MCF 10A (cell line): ENCODE measurements at regions of chr19 and their contacts with region 1.

Region 1: DNA sequence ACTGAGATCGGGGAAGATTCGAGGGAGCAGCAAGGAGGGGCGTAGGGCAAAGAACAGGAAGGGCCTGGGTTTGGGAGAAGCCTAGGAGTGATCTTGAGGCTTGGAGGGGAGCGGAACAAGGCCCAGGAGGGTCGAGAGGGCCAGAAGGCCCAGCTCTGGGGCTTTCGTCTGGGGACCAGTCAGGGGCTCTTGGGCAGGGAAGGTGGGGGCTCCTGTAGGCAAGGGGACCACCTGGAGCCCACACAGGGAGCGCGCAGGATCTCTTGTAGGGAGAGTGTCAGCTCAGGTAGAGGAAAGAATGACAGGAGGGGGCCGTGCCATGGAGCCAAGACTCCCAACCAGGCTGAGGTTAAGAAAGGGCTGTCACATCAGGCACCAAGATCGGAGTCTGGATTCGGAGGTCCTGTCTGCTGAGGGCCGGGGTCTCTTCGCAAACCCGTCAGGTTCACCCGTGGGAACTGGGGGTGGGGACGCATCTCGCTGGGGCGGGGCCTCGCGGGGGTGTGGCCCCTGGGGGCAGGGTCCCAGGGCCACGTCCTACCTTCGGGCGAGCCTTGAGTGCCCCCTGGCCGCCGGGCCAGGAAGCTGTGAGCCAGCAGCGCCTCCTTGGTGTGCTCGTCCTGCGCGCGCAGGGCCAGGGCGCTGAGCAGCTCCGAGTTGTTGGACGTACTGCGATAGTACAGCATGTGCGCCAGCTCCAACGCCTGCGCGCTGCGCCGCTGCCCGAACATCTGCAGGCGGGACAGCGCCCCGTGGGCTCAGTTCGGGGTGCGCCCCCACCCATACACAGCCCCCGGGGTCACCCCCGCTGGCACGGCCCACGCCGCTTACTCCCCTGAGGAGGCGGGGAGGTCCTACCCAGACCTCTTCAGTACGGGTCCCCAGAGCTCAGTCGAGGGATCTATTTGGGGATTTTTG is 8.4 kb downstream of the EMP3 start:
- DNase-seq: peak; percentile 96
- H3K4me3 Mint-ChIP-seq: peak overlapping the region; percentile 89
- H3K27ac Mint-ChIP-seq: peak overlapping the region; percentile 85
- H3K4me1 Mint-ChIP-seq: peaks cover 32% of the 10 kb centered on the region
- H3K27me3 Mint-ChIP-seq: no peaks in the 10 kb centered on the region
- CTCF ChIP-seq: peak; percentile 93

Region 2: DNA sequence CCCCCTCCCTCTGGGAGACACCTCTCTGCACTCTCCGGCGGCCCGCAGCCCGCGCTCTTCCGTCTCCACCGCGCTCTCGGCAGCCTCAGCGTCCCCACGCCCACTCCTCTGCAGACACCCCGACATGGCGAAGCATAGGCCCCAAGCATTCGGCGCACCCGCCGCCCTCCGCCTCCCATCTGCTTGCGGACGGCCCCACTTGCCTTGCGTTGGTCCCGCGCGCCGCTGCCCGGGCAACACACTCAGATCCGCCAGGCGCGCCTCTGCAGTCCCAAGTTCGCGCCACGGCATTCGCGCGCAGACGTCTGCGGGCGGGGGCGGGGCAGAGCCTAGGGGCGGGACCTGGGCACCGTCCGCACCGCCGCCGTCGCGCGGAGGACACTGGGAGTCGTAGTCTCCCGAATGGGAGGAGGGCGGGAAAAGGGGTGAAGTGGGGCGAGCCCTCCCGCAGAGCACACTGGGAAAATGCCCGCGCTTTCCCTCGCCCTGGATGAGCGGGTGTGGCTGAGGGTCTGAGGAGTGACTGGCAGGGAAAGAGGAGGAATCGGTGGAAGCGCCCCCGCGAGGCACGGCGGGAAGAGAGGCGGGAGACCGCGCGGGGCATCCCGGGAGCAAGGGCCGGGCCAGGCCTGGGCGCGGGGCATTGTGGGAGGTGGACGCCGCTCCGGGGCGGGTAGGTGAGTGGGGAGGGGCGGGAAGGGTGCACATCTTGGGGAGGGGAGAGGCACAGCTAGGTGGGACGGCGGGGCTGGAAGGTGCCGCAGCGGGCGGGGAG is 163.5 kb before region 1 on chr19 and contains the starts of genes LIG1 and ZSWIM9:
- CTCF ChIA-PET with region 1: no interaction called
- POLR2A ChIA-PET with region 1: no interaction called
- intact Hi-C with region 1: no loop called
- DNase-seq: peak; percentile 95
- H3K4me3 Mint-ChIP-seq: peak within 1 kb of the TSS; percentile 90
- H3K27ac Mint-ChIP-seq: peak within 1 kb of the TSS; percentile 90
- H3K4me1 Mint-ChIP-seq: peaks cover 19% of the 10 kb centered on the region
- H3K27me3 Mint-ChIP-seq: no peaks in the 10 kb centered on the region
- CTCF ChIP-seq: no peak
- total RNA-seq, gene LIG1: 12.2 and 14.6 TPM in 2 replicates
- total RNA-seq, gene ZSWIM9: 4.8 and 5.5 TPM in 2 replicates

Region 3: DNA sequence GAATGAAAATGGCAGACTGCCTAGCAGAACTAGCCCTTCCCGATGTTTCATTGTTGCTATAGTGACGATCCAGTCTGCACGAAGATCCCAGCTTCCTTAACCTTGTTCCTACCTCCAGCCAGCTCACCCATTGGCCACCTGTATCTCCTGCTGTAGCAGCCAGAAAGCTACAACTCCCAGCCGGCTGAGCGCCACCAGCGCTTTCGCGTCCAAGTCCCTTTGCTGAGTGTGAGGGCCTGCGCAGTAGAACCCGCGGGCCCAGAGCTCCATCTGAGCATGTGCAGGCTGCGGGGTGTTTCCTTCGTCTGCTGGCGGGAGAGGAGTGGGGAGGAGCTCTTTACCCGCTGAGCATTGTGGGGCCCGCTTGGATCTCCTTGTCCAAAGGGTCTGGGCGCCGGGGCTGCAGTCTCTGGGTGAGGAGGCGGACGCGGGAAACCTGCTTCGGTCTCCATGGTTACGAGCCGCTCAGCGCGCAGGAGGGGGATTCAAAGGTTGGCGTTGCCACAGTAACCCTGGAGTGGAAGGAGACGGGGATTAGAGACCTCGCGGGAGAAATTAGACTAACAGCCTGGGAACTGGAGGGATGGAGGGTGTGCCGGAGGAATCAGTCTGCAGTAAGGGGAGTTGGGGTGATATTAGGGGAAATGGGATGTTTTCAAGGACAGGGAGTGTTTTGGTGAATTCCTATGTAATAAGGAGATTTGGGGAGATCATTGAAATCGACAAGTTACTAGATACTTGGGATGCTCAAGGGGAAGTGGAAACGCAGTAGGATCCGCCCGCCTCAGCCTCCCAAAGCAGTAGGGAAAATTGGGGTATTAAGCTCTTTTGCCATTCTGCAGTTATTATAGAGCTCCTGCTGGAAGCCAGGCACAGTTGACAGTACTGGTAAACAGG is 129.7 kb before region 1 on chr19:
- CTCF ChIA-PET with region 1: interaction called, 5 read pairs
- POLR2A ChIA-PET with region 1: interaction called, 15 read pairs
- intact Hi-C with region 1: no loop called
- DNase-seq: peak; percentile 97
- H3K4me3 Mint-ChIP-seq: no peak overlapping the region
- H3K27ac Mint-ChIP-seq: no peak overlapping the region
- H3K4me1 Mint-ChIP-seq: no peaks in the 10 kb centered on the region
- H3K27me3 Mint-ChIP-seq: no peaks in the 10 kb centered on the region
- CTCF ChIP-seq: no peak

Region 4: DNA sequence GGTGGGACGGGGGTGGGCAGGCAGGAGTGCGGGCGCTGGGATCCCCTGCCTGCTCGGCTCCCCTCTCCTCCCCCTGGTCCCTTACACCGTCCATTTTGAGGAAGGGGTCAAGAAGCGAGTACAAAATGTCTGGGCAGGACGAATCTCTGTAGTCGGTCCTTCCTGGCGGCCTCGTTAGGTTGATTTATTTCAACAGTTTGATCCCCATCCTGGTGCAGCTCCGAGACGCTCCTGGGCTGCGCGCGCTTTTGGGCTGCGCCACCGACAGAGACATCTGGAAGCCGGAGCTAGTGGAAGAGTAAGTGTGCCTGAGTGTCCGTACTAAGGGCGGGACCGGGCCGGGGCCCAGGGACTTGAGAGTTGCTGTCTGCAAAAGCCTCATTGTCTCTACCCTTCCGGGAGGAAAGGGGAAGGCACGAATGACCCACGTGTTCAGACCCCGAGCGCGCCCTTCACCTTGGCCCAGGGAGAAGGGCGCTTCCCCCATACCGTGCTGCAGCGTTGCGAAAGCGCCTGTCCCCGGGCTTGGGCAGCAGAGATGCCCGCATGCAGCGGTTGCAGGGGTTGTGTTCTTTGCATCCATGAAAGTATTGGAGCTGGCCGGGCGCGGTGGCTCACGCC is 62.1 kb before region 1 on chr19:
- CTCF ChIA-PET with region 1: interaction called, 8 read pairs
- POLR2A ChIA-PET with region 1: interaction called, 5 read pairs
- intact Hi-C with region 1: loop called (anchors 1 kb)
- DNase-seq: peak; percentile 50
- H3K4me3 Mint-ChIP-seq: peak overlapping the region; percentile 70
- H3K27ac Mint-ChIP-seq: no peak overlapping the region
- H3K4me1 Mint-ChIP-seq: peaks cover 5% of the 10 kb centered on the region
- H3K27me3 Mint-ChIP-seq: peaks cover 9% of the 10 kb centered on the region
- CTCF ChIP-seq: no peak

Region 5: DNA sequence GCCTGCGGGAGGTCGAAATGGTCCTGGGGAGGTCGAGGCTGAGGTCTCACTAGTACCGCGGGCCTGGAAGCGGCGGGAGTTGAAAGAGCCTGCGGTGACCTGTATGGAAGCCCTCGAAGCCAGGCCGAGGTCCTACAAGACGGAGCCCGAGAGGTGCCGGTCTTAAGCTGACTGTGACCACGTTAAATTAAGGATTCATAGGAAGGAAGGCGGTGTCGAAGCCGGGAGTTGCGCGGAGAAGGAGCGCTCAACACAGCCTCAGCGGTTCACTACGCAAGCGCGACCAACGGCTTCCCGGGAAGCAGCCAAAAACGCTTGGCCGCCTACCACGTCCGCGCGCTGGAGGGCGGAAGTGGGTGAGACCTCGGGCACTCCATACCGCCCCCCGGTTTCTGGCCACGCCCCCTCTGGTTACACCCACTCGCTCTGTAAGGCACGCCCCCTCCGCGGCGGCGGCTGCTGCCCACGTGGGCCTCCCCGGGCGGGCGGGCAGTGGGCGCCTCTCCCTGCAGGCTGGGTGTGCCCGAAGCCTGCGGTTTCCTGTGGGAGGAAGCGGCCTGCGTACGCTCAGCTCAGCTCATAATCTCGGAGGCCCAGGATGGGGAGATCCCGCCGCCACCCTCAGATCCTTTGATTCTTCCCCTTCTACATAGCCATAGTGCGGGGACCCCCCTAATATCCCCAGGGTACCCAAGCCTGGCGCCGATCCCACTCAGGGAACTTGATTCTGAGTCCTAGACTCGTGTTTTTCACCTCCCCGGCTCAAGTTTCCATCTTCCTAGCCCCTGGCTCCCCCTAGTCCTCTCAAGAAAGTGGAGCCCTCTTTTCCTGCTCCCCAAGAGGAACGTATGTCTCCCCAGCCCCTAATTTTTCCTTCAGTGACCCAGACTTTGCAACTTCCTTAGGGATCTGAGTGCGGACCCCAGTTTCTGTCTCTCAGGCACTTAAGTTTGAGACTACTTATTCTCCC is 11.8 kb before region 1 on chr19:
- CTCF ChIA-PET with region 1: interaction called, 33 read pairs
- POLR2A ChIA-PET with region 1: interaction called, 139 read pairs
- intact Hi-C with region 1: loop called (anchors 1 kb)
- DNase-seq: peak; percentile 99
- H3K4me3 Mint-ChIP-seq: peak overlapping the region; percentile 95
- H3K27ac Mint-ChIP-seq: peak overlapping the region; percentile 97
- H3K4me1 Mint-ChIP-seq: peaks cover 43% of the 10 kb centered on the region
- H3K27me3 Mint-ChIP-seq: no peaks in the 10 kb centered on the region
- CTCF ChIP-seq: no peak

Region 6: GRCh38 chr19:48363810-48364563 is 30.3 kb after region 1 on chr19 and contains the starts of genes SYNGR4 and TMEM143:
- CTCF ChIA-PET with region 1: interaction called, 7 read pairs
- POLR2A ChIA-PET with region 1: interaction called, 43 read pairs
- intact Hi-C with region 1: no loop called
- DNase-seq: peak; percentile 100
- H3K4me3 Mint-ChIP-seq: peak within 1 kb of the TSS; percentile 79
- H3K27ac Mint-ChIP-seq: peak within 1 kb of the TSS; percentile 88
- H3K4me1 Mint-ChIP-seq: no peaks in the 10 kb centered on the region
- H3K27me3 Mint-ChIP-seq: no peaks in the 10 kb centered on the region
- CTCF ChIP-seq: no peak
- total RNA-seq, gene SYNGR4: not detected in 2 replicates
- total RNA-seq, gene TMEM143: 6.0 and 7.6 TPM in 2 replicates

Region 7: GRCh38 chr19:48391107-48391986 is 57.6 kb after region 1 on chr19 and contains the start of gene KDELR1:
- CTCF ChIA-PET with region 1: interaction called, 8 read pairs
- POLR2A ChIA-PET with region 1: interaction called, 5 read pairs
- intact Hi-C with region 1: loop called (anchors 5 kb)
- DNase-seq: peak; percentile 76
- H3K4me3 Mint-ChIP-seq: peak within 1 kb of the TSS; percentile 82
- H3K27ac Mint-ChIP-seq: peak within 1 kb of the TSS; percentile 90
- H3K4me1 Mint-ChIP-seq: peaks cover 25% of the 10 kb centered on the region
- H3K27me3 Mint-ChIP-seq: peaks cover 22% of the 10 kb centered on the region
- CTCF ChIP-seq: peak; percentile 89
- total RNA-seq, gene KDELR1: 113 and 134 TPM in 2 replicates

Region 8: GRCh38 chr19:48419158-48419920 is 85.6 kb after region 1 on chr19:
- CTCF ChIA-PET with region 1: no interaction called
- POLR2A ChIA-PET with region 1: no interaction called
- intact Hi-C with region 1: no loop called
- DNase-seq: no peak
- H3K4me3 Mint-ChIP-seq: no peak overlapping the region
- H3K27ac Mint-ChIP-seq: no peak overlapping the region
- H3K4me1 Mint-ChIP-seq: peaks cover 20% of the 10 kb centered on the region
- H3K27me3 Mint-ChIP-seq: no peaks in the 10 kb centered on the region
- CTCF ChIP-seq: no peak

Region 9: GRCh38 chr19:48445606-48446481 is 112.1 kb after region 1 on chr19 and contains the start of gene GRWD1:
- CTCF ChIA-PET with region 1: no interaction called
- POLR2A ChIA-PET with region 1: interaction called, 18 read pairs
- intact Hi-C with region 1: no loop called
- DNase-seq: peak; percentile 98
- H3K4me3 Mint-ChIP-seq: peak within 1 kb of the TSS; percentile 93
- H3K27ac Mint-ChIP-seq: peak within 1 kb of the TSS; percentile 94
- H3K4me1 Mint-ChIP-seq: peaks cover 23% of the 10 kb centered on the region
- H3K27me3 Mint-ChIP-seq: no peaks in the 10 kb centered on the region
- CTCF ChIP-seq: peak; percentile 6
- total RNA-seq, gene GRWD1: 45.1 and 55.8 TPM in 2 replicates